Aorta (tissue), 5 donors: ENCODE measurements at regions of chr16 and their contacts with region 1.

Region 1: DNA sequence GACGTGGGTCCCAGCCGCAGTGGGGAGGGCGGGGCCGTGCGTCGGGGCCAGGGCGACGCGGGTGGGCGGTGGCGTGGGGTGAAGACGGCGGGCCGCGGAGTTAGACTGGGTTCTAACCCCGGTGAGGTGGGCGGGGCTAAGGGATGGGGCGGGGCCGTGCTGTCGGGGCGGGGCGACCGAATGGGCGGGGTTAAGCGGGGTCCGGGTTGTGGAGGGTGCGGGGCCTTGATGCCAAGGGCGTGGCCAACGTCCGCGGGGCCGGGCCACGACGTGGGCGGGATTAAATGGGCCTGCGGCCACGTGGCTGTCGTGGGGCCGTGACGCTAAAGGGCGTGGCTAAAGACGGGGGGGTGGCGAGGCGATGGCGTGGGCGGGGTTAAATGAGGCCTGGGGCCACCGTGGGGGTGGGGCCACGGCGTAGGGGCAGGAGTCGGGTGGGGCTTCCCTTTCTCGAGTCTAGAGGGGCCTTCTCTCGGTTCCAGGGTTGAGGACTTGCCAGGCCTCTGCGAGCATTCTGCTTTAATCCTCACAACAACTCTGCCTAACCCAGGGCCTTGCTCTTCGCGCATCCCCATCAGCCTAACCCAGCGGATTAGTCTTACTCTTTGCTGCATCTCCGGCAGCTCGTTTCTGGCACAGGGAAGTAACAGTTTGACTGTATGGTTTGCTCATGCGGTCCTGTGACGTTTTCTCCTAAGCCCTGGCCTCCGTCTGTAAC is 739 bp downstream of the TCF25 start:
- DNase-seq: peak; percentile 97 to 99
- ATAC-seq: peak; percentile 96
- H3K4me3 ChIP-seq: peak overlapping the region; percentile 36 to 82
- H3K27ac ChIP-seq: peak overlapping the region; percentile 52 to 99
- H3K4me1 ChIP-seq: no peaks in the 10 kb centered on the region
- H3K27me3 ChIP-seq: no peaks in the 10 kb centered on the region

Region 2: GRCh38 chr16:89749647-89750046 is 124.5 kb before region 1 on chr16:
- intact Hi-C with region 1: no loop called
- DNase-seq: peak in 1 of 2 donors; percentile 65
- ATAC-seq: peak; percentile 26
- H3K4me3 ChIP-seq: no peak overlapping the region
- H3K27ac ChIP-seq: no peak overlapping the region
- H3K4me1 ChIP-seq: no peaks in the 10 kb centered on the region
- H3K27me3 ChIP-seq: no peaks in the 10 kb centered on the region

Region 3: DNA sequence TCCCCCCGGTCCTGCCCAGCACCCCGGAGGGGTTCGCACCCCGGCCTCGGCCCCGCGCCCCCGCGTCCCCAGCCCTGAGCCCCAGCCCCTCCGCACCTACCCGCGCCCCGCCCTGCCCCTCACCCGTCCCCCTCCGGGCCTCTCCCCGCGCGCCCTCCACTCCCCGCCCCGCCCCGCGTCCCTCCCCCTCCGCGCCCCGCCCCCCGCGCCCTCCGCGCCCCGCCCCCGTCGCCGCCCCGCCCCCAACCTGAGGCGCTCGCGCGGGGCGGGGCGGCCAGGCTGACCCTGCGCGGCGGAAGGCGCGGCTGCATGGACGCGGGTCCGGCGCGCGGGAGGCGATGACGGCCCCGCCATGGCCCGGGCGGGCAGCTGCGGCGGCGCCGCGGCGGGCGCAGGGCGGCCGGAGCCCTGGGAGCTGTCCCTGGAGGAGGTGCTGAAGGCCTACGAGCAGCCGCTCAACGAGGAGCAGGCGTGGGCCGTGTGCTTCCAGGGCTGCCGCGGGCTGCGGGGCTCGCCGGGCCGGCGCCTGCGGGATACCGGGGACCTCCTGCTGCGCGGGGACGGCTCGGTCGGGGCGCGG is 45.8 kb before region 1 on chr16 and contains the start of gene SPIRE2:
- intact Hi-C with region 1: loop called in 1 of 2 experiments (anchors 5 kb)
- DNase-seq: peak; percentile 82 to 93
- ATAC-seq: peak; percentile 83
- H3K4me3 ChIP-seq: peak within 1 kb of the TSS in 1 of 2 donors; percentile 23
- H3K27ac ChIP-seq: no peak within 1 kb of the TSS
- H3K4me1 ChIP-seq: no peaks in the 10 kb centered on the region
- H3K27me3 ChIP-seq: no peaks in the 10 kb centered on the region
- total RNA-seq, gene SPIRE2: 0.62 to 2.2 TPM

Region 4: DNA sequence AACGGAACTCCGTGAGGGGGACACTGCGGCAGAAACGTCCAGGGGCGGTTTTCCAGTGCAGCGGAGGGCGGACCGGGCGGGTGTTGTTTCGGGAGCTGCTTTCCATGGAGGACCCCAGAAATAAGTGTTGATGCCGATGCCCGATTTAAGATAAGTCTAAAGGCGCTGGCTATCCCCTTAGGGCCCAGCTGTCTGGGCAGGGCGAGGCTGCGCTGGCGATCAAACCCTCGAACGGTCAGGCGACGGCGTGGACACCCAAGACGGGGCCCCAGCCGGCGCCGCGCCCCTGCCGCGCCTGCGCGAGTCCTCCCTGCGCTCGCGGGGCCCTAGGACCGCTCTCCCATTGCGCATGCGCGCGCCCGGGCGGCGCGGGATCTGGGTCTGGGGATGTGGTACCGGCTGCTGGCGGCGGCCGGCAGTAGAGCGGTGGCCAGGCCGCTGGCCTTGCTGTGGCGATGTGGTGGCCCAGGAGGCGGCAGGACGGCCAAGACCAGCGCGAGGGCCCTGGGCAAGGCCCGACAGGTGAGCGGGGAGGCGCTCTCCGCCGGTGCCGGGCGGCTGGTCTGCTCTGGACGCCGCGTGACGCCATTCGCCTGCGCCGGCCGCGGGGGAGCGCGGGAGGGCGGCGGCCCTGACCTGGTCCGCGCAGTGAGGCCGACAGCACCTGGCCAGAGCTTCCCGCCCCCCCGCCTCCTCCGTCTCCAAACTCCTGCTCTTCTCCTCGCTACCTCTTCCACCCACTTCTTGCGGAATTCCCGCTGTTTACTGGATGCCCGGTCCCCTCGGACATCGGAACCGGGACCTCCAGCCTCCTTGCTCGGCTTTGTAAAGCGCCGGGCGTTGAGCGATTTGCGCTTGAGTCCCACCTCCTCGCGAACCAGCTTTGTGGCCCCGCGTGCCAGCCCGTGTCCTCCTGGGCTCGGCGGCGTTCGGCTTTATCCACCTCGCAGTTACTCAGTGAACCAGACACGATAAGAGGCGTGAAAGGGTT is 98.4 kb after region 1 on chr16:
- intact Hi-C with region 1: loop called in 1 of 2 experiments (anchors 10 kb)
- DNase-seq: peak; percentile 94 to 97
- ATAC-seq: peak; percentile 98
- H3K4me3 ChIP-seq: peak overlapping the region; percentile 68 to 76
- H3K27ac ChIP-seq: peak overlapping the region; percentile 19 to 20
- H3K4me1 ChIP-seq: no peaks in the 10 kb centered on the region
- H3K27me3 ChIP-seq: no peaks in the 10 kb centered on the region

Region 5: DNA sequence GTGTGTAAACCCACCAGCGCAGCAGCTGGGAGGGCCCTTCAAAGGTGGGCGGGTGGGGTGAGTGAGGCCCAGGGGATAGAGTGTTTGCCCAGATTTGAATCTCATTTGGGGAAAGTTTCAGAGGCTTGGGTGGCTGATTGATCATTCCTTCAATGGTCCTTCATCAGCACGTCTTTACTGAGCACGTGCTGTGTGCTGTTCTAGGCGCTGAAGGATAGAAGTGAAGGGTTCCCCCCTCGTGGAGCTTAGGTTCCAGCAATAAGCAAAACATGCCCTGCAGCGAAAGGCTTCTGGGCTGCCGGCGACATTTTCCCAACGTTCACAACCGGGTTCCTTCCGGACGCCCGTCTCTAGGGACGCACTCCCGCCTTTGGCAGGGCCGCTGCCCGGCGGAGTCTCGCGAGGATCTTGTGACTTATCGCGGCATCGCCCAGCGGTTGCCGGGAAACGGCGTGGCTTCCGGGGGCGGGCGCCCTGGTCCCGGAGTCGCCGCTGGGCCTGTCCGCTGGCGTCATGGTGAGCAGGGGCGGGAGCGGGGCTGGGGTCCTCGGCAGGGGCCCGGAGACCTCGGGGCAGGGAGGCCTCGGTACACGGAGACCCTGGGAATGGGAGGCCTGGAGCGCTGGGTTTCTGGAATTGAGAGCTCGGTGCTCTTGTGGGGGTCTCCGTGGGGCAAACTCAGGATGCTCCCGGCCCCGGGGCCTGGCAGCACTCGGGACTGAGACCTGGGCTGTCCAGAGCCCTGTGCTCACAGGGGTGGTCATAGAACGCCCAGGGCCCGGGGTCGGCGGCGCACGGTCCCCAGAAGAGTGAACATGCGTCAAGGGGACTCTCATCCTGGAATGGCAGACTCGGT is 148.3 kb after region 1 on chr16:
- intact Hi-C with region 1: loop called in 1 of 2 experiments (anchors 10 kb)
- DNase-seq: peak; percentile 95 to 98
- ATAC-seq: peak; percentile 96
- H3K4me3 ChIP-seq: peak overlapping the region; percentile 60 to 91
- H3K27ac ChIP-seq: peak overlapping the region in 1 of 2 donors; percentile 20
- H3K4me1 ChIP-seq: no peaks in the 10 kb centered on the region
- H3K27me3 ChIP-seq: no peaks in the 10 kb centered on the region